ENCODE measurements at regions of chr11 and their contacts with region 1.

Region 1: DNA sequence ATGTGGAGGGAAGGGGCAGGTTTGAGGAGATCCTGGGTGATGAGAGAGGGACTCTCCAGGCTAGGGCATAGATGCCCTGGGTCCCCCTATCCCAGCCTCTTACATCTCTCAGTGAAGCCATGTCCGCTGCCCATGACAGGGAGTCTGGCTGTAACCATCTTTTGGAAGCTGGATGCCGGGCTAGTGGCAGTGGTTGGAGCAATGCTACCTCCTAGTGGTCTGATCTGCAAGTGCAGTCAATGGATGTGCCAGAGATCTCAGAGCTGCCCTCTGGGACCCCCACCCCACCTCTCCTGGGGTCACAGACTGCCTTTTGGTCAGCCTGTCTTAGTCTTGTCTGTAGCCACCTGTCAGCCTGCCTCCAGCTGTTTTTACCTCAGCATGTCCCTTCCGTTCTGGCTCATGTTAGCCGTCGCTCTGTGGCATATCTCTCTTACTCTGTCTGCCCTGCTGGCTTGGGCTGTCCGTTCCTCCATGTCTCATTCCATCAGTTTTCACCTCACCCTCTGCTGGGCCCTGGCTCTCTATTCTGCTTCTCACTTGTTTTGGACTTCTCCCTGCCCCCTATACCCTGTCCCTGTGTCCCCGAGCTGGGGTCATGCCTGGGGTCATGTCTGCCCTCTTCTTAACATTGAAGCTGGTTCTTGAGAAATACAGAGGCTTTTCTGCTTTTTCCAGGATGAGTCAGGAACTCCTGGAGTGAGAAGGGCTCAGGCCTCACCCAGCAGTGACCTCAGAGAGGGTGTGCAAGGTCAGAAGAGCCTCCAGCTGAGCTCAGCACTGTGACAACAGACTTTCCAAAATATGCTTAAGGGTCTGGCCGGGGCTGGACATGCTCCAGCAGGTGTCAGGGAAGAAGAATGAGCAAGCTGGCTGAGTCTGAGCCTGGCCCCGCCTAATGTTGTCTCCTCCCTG is 52.0 kb upstream of the THY1 start:
- DNase-seq: peak; percentile 72
- ATAC-seq: peak; percentile 91
- H3K4me3 Mint-ChIP-seq: no peak overlapping the region
- H3K27ac Mint-ChIP-seq: no peak overlapping the region
- H3K4me1 Mint-ChIP-seq: no peaks in the 10 kb centered on the region
- H3K27me3 Mint-ChIP-seq: peaks cover 19% of the 10 kb centered on the region
- CTCF ChIP-seq: peak; percentile 82

Region 2: GRCh38 chr11:119373921-119374631 is 100.9 kb before region 1 on chr11:
- CTCF ChIA-PET with region 1: interaction called, 30 read pairs
- POLR2A ChIA-PET with region 1: interaction called, 4 read pairs
- intact Hi-C with region 1: no loop called
- DNase-seq: peak; percentile 56
- ATAC-seq: peak; percentile 75
- H3K4me3 Mint-ChIP-seq: no peak overlapping the region
- H3K27ac Mint-ChIP-seq: no peak overlapping the region
- H3K4me1 Mint-ChIP-seq: peaks cover 7% of the 10 kb centered on the region
- H3K27me3 Mint-ChIP-seq: peaks cover 6% of the 10 kb centered on the region
- CTCF ChIP-seq: peak; percentile 91

Region 3: DNA sequence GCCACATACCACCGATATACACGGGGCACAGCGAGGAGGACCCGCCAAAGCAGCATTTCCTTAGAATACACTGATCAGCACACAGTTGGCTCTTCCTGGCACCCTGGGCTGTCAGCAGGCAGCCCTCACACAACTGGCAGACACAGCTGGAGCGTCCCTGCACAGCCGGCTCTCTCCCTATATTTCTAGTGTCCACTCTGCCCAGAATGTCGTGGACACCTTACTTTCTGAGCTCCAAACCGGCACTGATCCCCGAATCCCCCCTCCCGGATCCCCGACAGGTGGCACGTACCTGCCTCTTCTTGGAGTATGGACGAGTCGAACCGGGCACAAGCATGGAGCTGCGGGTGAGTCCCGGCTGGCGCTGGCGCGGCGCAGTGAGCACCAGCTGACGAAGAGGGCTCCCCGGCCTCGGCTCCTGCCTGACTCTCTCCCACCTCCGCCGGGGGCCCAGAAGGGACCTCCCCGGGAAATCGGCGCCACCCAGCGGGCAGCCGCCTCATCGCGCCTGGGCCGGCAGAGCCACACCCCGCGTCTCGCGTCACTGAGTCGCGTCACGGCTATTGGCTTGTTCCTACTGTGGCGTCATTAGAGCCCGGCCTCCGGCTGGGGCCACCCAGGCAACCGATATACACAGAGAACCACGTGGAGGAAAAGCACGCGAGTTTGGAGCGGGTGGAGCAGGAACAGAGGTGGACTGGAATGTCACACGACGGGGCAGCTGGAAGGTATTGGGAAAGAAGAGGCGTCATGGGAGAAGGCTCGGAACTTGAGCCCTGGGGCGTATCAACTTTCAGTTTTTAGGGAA is 93.6 kb before region 1 on chr11 and contains the start of gene USP2:
- CTCF ChIA-PET with region 1: interaction called, 35 read pairs
- POLR2A ChIA-PET with region 1: no interaction called
- intact Hi-C with region 1: no loop called
- DNase-seq: peak; percentile 97
- ATAC-seq: peak; percentile 99
- H3K4me3 Mint-ChIP-seq: no peak within 1 kb of the TSS
- H3K27ac Mint-ChIP-seq: no peak within 1 kb of the TSS
- H3K4me1 Mint-ChIP-seq: peaks cover 7% of the 10 kb centered on the region
- H3K27me3 Mint-ChIP-seq: no peaks in the 10 kb centered on the region
- CTCF ChIP-seq: peak; percentile 88
- total RNA-seq, gene USP2: 0.61 to 0.96 TPM

Region 4: GRCh38 chr11:119388103-119388502 is 86.8 kb before region 1 on chr11:
- CTCF ChIA-PET with region 1: interaction called, 35 read pairs
- POLR2A ChIA-PET with region 1: no interaction called
- intact Hi-C with region 1: no loop called
- DNase-seq: no peak
- ATAC-seq: no peak
- H3K4me3 Mint-ChIP-seq: no peak overlapping the region
- H3K27ac Mint-ChIP-seq: no peak overlapping the region
- H3K4me1 Mint-ChIP-seq: no peaks in the 10 kb centered on the region
- H3K27me3 Mint-ChIP-seq: peaks cover 2% of the 10 kb centered on the region
- CTCF ChIP-seq: no peak

Region 5: GRCh38 chr11:119460582-119460981 is 14.4 kb before region 1 on chr11:
- CTCF ChIA-PET with region 1: interaction called, 16 read pairs
- POLR2A ChIA-PET with region 1: interaction called, 3 read pairs
- intact Hi-C with region 1: no loop called
- DNase-seq: no peak
- ATAC-seq: no peak
- H3K4me3 Mint-ChIP-seq: no peak overlapping the region
- H3K27ac Mint-ChIP-seq: no peak overlapping the region
- H3K4me1 Mint-ChIP-seq: no peaks in the 10 kb centered on the region
- H3K27me3 Mint-ChIP-seq: peaks cover 20% of the 10 kb centered on the region
- CTCF ChIP-seq: no peak

Region 6: DNA sequence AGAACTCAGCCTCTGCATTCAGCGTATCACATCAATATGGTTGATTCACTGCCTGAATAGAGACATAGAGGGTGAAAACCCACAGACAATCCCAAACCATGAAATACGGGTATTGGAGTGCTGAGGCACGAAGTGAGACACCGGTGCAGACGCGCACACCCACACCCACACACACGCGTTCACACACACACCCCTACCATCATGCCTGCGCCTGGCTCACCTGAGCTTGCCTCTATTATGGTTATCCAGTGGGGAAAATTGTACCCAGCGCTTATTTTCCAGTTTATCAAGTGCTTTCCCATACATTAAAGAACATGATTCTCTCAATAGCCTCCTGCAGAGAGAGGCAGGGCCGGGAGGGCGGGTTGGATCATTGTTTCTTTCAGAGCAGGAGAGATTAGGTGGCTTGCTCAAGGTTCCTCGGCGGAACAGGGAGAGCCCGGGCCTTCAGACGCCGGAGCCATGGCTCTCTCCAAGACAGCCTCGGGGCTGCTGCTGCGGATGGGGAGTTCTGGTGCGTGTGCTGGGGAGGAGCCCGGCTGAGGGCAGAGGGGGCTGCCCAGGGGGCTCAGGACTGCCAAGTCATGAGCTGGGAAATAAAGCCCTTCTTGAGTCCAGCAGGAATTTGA is 27.0 kb after region 1 on chr11:
- CTCF ChIA-PET with region 1: no interaction called
- POLR2A ChIA-PET with region 1: no interaction called
- intact Hi-C with region 1: no loop called
- DNase-seq: no peak
- ATAC-seq: no peak
- H3K4me3 Mint-ChIP-seq: no peak overlapping the region
- H3K27ac Mint-ChIP-seq: no peak overlapping the region
- H3K4me1 Mint-ChIP-seq: no peaks in the 10 kb centered on the region
- H3K27me3 Mint-ChIP-seq: peaks cover 11% of the 10 kb centered on the region
- CTCF ChIP-seq: no peak